ENCODE measurements at regions of chr16 and their contacts with region 1.

Region 1: GRCh38 chr16:48385272-48386150 is at the start of gene SIAH1:
- DNase-seq: peak; percentile 88 to 95
- ATAC-seq: peak; percentile 93
- H3K4me3 ChIP-seq: peak within 1 kb of the TSS; percentile 96 to 99
- H3K27ac ChIP-seq: peak within 1 kb of the TSS; percentile 95 to 99
- H3K4me1 ChIP-seq: peaks cover 2 to 16% of the 10 kb centered on the region in 2 donors
- H3K27me3 ChIP-seq: no peaks in the 10 kb centered on the region
- total RNA-seq, gene SIAH1: 23.9 to 24.3 TPM

Region 2: GRCh38 chr16:48225456-48225855 is 160.1 kb before region 1 on chr16:
- intact Hi-C with region 1: no loop called
- DNase-seq: no peak
- ATAC-seq: no peak
- H3K4me3 ChIP-seq: no peak overlapping the region
- H3K27ac ChIP-seq: no peak overlapping the region
- H3K4me1 ChIP-seq: no peaks in the 10 kb centered on the region
- H3K27me3 ChIP-seq: no peaks in the 10 kb centered on the region

Region 3: DNA sequence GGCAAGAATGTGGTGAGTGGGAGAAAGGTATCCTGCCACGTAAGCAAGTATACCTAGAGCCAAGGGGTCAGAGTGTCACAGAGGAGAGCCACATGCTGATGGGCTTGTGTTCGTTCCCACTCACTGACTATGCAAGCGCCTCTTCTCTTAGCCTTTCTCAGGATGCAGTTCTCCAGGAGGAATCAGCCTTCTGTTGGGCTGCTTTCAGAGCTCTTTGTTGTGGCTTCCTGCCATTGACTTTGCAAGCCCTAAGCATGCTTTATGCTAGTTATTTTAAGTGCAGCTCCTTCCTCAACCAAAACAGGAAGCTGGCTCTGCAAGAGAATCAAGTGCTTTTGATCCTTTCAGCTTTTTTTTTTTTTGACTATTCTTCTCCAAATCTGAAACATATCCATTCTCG is 66.9 kb before region 1 on chr16:
- intact Hi-C with region 1: no loop called
- DNase-seq: peak in 1 of 2 donors; percentile 52
- ATAC-seq: peak; percentile 76
- H3K4me3 ChIP-seq: no peak overlapping the region
- H3K27ac ChIP-seq: peak overlapping the region in 1 of 2 donors; percentile 36
- H3K4me1 ChIP-seq: no peaks in the 10 kb centered on the region
- H3K27me3 ChIP-seq: no peaks in the 10 kb centered on the region

Region 4: DNA sequence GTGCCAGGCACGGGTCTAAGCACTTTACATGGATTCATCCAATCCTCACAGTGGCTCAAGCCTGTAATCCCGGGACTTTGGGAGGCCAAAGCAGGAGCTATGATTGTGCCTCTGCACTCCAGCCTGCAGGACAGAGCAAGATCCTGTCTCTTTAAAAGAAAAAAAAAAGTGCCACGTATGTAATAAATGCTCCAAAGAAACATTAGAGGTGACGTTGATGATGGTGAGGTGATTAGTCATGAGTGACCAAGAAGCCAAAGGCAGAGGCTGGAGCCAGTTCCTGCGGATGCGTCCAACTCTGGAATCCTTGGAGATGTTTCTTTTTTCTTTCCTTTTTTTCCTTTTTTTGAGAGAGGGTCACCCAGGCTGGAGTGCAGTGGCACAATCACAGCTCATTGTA is 59.1 kb after region 1 on chr16:
- intact Hi-C with region 1: loop called in 1 of 2 experiments (anchors 5 kb)
- DNase-seq: peak in 1 of 2 donors; percentile 68
- ATAC-seq: peak; percentile 80
- H3K4me3 ChIP-seq: no peak overlapping the region
- H3K27ac ChIP-seq: peak overlapping the region in 1 of 2 donors; percentile 87
- H3K4me1 ChIP-seq: peaks cover 0 to 4% of the 10 kb centered on the region in 2 donors
- H3K27me3 ChIP-seq: no peaks in the 10 kb centered on the region

Region 5: DNA sequence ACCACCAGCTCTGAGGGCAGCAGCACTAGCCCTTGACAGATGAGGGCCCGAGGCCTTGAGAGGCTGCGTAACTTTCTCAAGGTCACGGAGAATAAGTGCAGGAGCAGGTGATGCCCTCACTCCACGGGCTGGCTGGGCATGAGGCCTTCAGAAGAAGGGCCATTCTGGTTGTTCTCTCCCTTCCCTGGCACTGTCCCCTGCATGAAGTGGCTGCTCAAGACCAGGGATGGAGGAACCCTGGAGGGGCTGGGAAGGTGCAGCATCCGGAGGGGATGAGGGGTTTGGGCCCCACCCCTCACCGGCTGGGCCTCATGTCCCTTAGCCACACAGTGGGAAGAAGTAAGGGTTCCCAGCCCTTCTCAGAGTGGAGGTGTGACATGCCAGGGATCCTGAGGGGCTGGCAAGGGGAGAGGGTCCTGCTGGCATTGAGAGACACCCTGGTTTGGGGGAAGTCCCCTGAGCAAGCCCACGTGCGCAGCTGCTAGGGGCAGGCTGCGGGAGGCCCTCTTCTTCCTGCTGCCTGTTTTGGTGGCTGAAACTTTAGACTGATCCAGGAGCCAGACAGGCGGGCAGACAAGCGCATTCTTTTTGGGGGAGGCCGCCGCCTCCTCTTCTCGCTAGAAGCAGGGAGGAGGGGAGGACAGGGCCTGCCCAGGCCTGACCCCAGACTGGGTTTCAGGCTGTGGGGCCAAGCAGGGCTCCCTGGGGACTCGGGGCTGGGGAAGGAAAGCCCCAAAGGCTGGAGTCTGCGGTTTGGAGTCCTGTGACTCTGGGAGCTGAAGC is 150.5 kb after region 1 on chr16:
- intact Hi-C with region 1: loop called in 1 of 2 experiments (anchors 5 kb)
- DNase-seq: peak; percentile 87 to 92
- ATAC-seq: peak; percentile 78
- H3K4me3 ChIP-seq: no peak overlapping the region
- H3K27ac ChIP-seq: peak overlapping the region; percentile 47 to 70
- H3K4me1 ChIP-seq: no peaks in the 10 kb centered on the region
- H3K27me3 ChIP-seq: no peaks in the 10 kb centered on the region